Activated CD4-positive, alpha-beta T cell treated with anti-CD3 and anti-CD28 coated beads, Interleukin-2, amount 10 ng/mL, durations not matched to agents 7 days and 5 days (primary cell): ENCODE measurements at regions of chr4 and their contacts with region 1.

Region 1: DNA sequence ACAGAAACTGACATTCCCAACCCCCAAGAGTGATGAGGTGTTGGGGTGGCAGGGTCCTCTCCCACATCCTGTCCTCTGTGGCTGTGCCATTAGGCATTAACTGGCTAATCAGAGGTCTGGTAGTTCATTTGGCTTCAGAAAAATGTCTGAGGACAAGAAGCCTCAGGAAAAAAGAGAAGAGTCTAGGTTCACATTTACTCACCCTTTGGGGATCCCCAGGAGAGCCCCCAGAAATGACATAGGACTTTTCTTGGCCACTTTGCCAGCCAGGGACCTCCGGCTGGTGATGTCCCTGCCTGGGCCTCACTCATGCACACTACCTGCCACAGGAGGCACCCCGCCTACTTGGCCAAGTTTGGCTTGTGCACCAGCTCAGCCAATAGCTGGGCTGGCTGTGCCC is 173.0 kb downstream of the RBM46 start:
- DNase-seq: no peak
- H3K4me3 Mint-ChIP-seq: no peak overlapping the region
- H3K27ac Mint-ChIP-seq: no peak overlapping the region
- H3K4me1 Mint-ChIP-seq: no peaks in the 10 kb centered on the region
- H3K27me3 Mint-ChIP-seq: no peaks in the 10 kb centered on the region

Region 2: GRCh38 chr4:153987291-153987690 is 966.8 kb before region 1 on chr4:
- CTCF ChIA-PET with region 1: no interaction called
- POLR2A ChIA-PET with region 1: interaction called, 10 read pairs
- DNase-seq: no peak
- H3K4me3 Mint-ChIP-seq: no peak overlapping the region
- H3K27ac Mint-ChIP-seq: no peak overlapping the region
- H3K4me1 Mint-ChIP-seq: no peaks in the 10 kb centered on the region
- H3K27me3 Mint-ChIP-seq: no peaks in the 10 kb centered on the region